MCF 10A (cell line): ENCODE measurements at regions of chr9 and their contacts with region 1.

Region 1: GRCh38 chr9:69027355-69028096 is 8.0 kb upstream of the FXN start:
- DNase-seq: peak; percentile 67
- H3K4me3 Mint-ChIP-seq: no peak overlapping the region
- H3K27ac Mint-ChIP-seq: no peak overlapping the region
- H3K4me1 Mint-ChIP-seq: peaks cover 6% of the 10 kb centered on the region
- H3K27me3 Mint-ChIP-seq: peaks cover 21% of the 10 kb centered on the region
- CTCF ChIP-seq: peak; percentile 69

Region 2: GRCh38 chr9:68530618-68531017 is 496.9 kb before region 1 on chr9:
- CTCF ChIA-PET with region 1: no interaction called
- POLR2A ChIA-PET with region 1: no interaction called
- intact Hi-C with region 1: no loop called
- DNase-seq: no peak
- H3K4me3 Mint-ChIP-seq: no peak overlapping the region
- H3K27ac Mint-ChIP-seq: no peak overlapping the region
- H3K4me1 Mint-ChIP-seq: no peaks in the 10 kb centered on the region
- H3K27me3 Mint-ChIP-seq: peaks cover 16% of the 10 kb centered on the region
- CTCF ChIP-seq: no peak

Region 3: DNA sequence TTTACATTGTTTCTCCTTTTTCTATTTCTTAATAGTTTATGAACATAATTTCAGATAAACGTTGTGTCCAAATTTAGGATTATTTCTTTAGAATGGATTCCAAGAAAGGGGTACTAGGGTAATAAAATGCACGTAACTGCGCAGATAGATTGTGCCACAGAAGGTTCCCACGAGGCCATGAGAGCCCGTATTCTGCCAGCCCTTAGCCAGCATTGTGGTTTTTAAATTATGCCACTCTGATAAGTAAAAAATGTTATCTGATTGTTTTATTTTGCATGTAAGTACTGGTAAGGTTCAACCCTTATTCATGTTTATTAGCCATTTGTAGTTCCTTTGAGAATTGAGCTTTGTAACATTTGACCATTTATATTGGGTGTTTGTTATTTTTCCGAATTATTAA is 102.4 kb before region 1 on chr9:
- CTCF ChIA-PET with region 1: no interaction called
- POLR2A ChIA-PET with region 1: no interaction called
- intact Hi-C with region 1: no loop called
- DNase-seq: no peak
- H3K4me3 Mint-ChIP-seq: no peak overlapping the region
- H3K27ac Mint-ChIP-seq: no peak overlapping the region
- H3K4me1 Mint-ChIP-seq: no peaks in the 10 kb centered on the region
- H3K27me3 Mint-ChIP-seq: peaks cover 70% of the 10 kb centered on the region
- CTCF ChIP-seq: no peak

Region 4: GRCh38 chr9:69004836-69005235 is 22.7 kb before region 1 on chr9:
- CTCF ChIA-PET with region 1: interaction called, 16 read pairs
- POLR2A ChIA-PET with region 1: no interaction called
- intact Hi-C with region 1: no loop called
- DNase-seq: peak; percentile 64
- H3K4me3 Mint-ChIP-seq: no peak overlapping the region
- H3K27ac Mint-ChIP-seq: no peak overlapping the region
- H3K4me1 Mint-ChIP-seq: peaks cover 6% of the 10 kb centered on the region
- H3K27me3 Mint-ChIP-seq: peaks cover 65% of the 10 kb centered on the region
- CTCF ChIP-seq: no peak

Region 5: GRCh38 chr9:69012696-69013381 is 14.7 kb before region 1 on chr9:
- CTCF ChIA-PET with region 1: interaction called, 14 read pairs
- POLR2A ChIA-PET with region 1: interaction called, 3 read pairs
- intact Hi-C with region 1: no loop called
- DNase-seq: no peak
- H3K4me3 Mint-ChIP-seq: no peak overlapping the region
- H3K27ac Mint-ChIP-seq: peak overlapping the region; percentile 63
- H3K4me1 Mint-ChIP-seq: no peaks in the 10 kb centered on the region
- H3K27me3 Mint-ChIP-seq: peaks cover 43% of the 10 kb centered on the region
- CTCF ChIP-seq: no peak